ENCODE measurements at regions of chr3 and their contacts with region 1.

Region 1: GRCh38 chr3:141561426-141562034 is 74.7 kb downstream of the RASA2 start:
- DNase-seq: peak; percentile 30
- H3K4me3 ChIP-seq: no peak overlapping the region
- H3K27ac ChIP-seq: no peak overlapping the region
- H3K4me1 ChIP-seq: no peaks in the 10 kb centered on the region
- H3K27me3 ChIP-seq: no peaks in the 10 kb centered on the region
- CTCF ChIP-seq: peak; percentile 98 to 99

Region 2: GRCh38 chr3:141311496-141312353 is 249.8 kb before region 1 on chr3:
- CTCF ChIA-PET with region 1: no interaction called
- dilution Hi-C with region 1: no loop called
- in situ Hi-C with region 1: loop called in 1 of 2 experiments (anchors 25 kb)
- intact Hi-C with region 1: loop called (anchors 2 kb)
- DNase-seq: peak; percentile 94
- H3K4me3 ChIP-seq: peak overlapping the region; percentile 75 to 89 (median 78)
- H3K27ac ChIP-seq: peak overlapping the region; percentile 59
- H3K4me1 ChIP-seq: peaks cover 12% of the 10 kb centered on the region
- H3K27me3 ChIP-seq: no peaks in the 10 kb centered on the region
- CTCF ChIP-seq: peak; percentile 65 to 72

Region 3: GRCh38 chr3:141471160-141471559 is 90.4 kb before region 1 on chr3:
- CTCF ChIA-PET with region 1: no interaction called
- dilution Hi-C with region 1: no loop called
- in situ Hi-C with region 1: loop called in 1 of 2 experiments (anchors 5 kb)
- intact Hi-C with region 1: loop called (anchors 1 kb)
- DNase-seq: peak; percentile 48
- H3K4me3 ChIP-seq: no peak overlapping the region
- H3K27ac ChIP-seq: no peak overlapping the region
- H3K4me1 ChIP-seq: no peaks in the 10 kb centered on the region
- H3K27me3 ChIP-seq: no peaks in the 10 kb centered on the region
- CTCF ChIP-seq: no peak

Region 4: DNA sequence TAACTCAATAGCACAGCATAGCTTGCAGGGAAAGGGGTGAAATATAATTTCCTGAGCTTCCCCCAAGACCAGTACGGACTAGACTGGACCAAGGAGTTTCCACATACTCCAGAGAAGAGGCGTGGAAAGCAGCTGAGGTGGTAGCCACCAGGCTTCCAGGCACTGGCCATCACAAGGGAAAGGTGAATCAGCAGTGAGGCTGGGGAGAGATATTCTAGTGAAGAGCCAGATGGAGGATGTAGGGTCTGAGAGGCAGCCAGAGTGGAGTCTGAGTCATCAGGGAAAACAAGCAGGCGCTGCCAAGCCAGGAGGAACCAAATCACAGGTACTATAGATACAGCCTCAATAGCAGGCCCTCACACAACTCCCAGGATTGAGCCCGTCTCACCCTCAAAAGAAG is 84.3 kb before region 1 on chr3:
- CTCF ChIA-PET with region 1: no interaction called
- dilution Hi-C with region 1: no loop called
- in situ Hi-C with region 1: loop called in 1 of 2 experiments (anchors 5 kb)
- intact Hi-C with region 1: loop called (anchors 1 kb)
- DNase-seq: peak; percentile 98
- H3K4me3 ChIP-seq: no peak overlapping the region
- H3K27ac ChIP-seq: no peak overlapping the region
- H3K4me1 ChIP-seq: peaks cover 15% of the 10 kb centered on the region
- H3K27me3 ChIP-seq: no peaks in the 10 kb centered on the region
- CTCF ChIP-seq: no peak

Region 5: GRCh38 chr3:141863491-141863890 is 302.0 kb after region 1 on chr3:
- CTCF ChIA-PET with region 1: no interaction called
- dilution Hi-C with region 1: no loop called
- in situ Hi-C with region 1: no loop called
- intact Hi-C with region 1: no loop called
- DNase-seq: no peak
- H3K4me3 ChIP-seq: no peak overlapping the region
- H3K27ac ChIP-seq: no peak overlapping the region
- H3K4me1 ChIP-seq: no peaks in the 10 kb centered on the region
- H3K27me3 ChIP-seq: no peaks in the 10 kb centered on the region
- CTCF ChIP-seq: no peak

Measured in mammary epithelial cell (primary cell).